HEK293T (cell line): ENCODE measurements at regions of chr10 and their contacts with region 1.

Region 1: DNA sequence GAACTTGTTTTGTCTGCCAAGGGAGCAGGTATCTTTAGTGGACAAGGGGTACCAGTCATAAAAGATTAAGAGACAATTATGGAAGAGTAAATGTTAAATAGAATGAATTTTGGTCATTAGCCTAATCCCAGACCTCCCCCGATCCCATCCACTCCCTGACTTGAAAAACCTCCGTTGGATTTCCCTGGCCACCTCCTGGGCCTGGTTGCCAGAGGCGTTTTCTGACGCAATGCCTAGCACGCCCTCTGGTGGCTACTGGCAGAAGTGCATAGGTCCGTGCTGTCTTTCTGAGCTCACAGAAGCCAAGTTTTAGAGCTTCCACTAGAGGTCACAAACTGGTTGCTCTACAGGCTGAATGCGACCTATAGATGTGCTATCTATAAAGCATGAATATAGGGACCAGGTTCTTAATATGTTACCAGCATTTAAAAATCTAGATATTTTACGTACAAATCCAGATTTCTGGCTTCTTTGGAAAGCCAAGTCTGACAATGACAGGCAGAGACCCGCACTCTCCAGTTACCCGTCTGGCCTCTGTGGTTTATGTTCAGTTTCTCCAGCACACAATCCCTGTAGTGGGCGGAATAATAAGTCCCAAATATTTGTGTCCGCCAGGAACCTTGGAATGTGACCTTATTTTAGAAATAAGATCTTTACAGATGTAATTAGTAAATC is 39.8 kb downstream of the SPOCK2 start:
- DNase-seq: peak; percentile 91

Region 2: GRCh38 chr10:71957546-71958275 is 90.9 kb before region 1 on chr10:
- CTCF ChIA-PET with region 1: interaction called, 24 read pairs
- POLR2A ChIA-PET with region 1: no interaction called
- DNase-seq: no peak

Region 3: GRCh38 chr10:72058989-72059842 is 10.6 kb after region 1 on chr10:
- CTCF ChIA-PET with region 1: interaction called, 21 read pairs
- POLR2A ChIA-PET with region 1: interaction called, 3 read pairs
- DNase-seq: no peak